RWPE1 (cell line): ENCODE measurements at regions of chr12 and their contacts with region 1.

Region 1: GRCh38 chr12:974281-974862 is 16.7 kb upstream of the ERC1 start:
- DNase-seq: no peak
- H3K27ac ChIP-seq: no peak overlapping the region
- CTCF ChIP-seq: no peak

Region 2: DNA sequence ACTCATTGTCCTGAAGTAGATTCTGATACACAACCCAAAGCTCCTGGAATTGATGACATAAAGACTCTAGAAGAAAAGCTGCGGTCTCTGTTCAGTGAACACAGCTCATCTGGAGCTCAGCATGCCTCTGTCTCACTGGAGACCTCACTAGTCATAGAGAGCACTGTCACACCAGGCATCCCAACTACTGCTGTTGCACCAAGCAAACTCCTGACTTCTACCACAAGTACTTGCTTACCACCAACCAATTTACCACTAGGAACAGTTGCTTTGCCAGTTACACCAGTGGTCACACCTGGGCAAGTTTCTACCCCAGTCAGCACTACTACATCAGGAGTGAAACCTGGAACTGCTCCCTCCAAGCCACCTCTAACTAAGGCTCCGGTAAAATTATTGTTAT is 88.7 kb before region 1 on chr12:
- CTCF ChIA-PET with region 1: no interaction called
- POLR2A ChIA-PET with region 1: interaction called, 16 read pairs
- DNase-seq: no peak
- H3K27ac ChIP-seq: no peak overlapping the region
- CTCF ChIP-seq: no peak

Region 3: DNA sequence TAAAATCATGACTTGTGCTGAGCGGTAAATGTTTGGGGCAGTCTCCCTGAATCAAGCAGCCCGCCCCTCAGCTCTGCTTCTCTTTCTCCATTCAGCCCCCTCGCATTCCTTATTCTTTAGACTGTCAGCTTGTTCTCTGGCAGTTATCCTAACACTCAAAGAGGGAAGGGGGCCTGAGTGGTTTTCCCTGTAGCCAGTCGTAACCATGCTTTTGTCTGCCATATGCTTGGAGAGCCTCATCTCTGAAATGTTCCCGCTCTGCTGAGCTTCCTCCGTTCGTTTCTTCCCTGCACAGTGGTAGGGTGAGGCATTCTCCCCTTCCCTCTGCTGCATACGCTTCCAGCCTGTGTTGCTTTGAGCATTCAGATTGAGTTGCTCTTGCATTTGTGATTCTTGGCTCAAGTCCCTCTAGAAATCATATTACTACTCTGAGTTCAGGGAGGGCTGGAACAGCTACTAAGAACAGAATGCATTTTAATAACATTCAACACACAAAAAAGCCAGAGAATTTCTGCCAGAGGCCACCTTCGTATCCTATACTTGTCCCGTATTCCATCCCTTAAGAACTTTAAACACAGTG is 500.3 kb after region 1 on chr12:
- CTCF ChIA-PET with region 1: no interaction called
- POLR2A ChIA-PET with region 1: no interaction called
- DNase-seq: peak; percentile 19
- H3K27ac ChIP-seq: peak overlapping the region; percentile 81
- CTCF ChIP-seq: no peak